Activated CD8-positive, alpha-beta memory T cell treated with anti-CD3 and anti-CD28 coated beads, Interleukin-2, amount 10 ng/mL, durations not matched to agents 7 days and 5 days (primary cell): ENCODE measurements at regions of chr6 and their contacts with region 1.

Region 1: GRCh38 chr6:33771146-33772081 is 17.5 kb downstream of the LEMD2 start:
- DNase-seq: peak; percentile 73
- ATAC-seq: peak; percentile 81
- H3K4me3 Mint-ChIP-seq: no peak overlapping the region
- H3K27ac Mint-ChIP-seq: no peak overlapping the region
- H3K4me1 Mint-ChIP-seq: peaks cover 12% of the 10 kb centered on the region
- H3K27me3 Mint-ChIP-seq: peaks cover 10% of the 10 kb centered on the region

Region 2: GRCh38 chr6:33744001-33744848 is 27.2 kb before region 1 on chr6:
- CTCF ChIA-PET with region 1: interaction called, 17 read pairs
- DNase-seq: peak; percentile 80
- ATAC-seq: peak; percentile 78
- H3K4me3 Mint-ChIP-seq: no peak overlapping the region
- H3K27ac Mint-ChIP-seq: no peak overlapping the region
- H3K4me1 Mint-ChIP-seq: no peaks in the 10 kb centered on the region
- H3K27me3 Mint-ChIP-seq: peaks cover 18% of the 10 kb centered on the region

Region 3: GRCh38 chr6:33788694-33789549 is 17.5 kb after region 1 on chr6 and contains the start of gene LEMD2:
- CTCF ChIA-PET with region 1: interaction called, 16 read pairs
- DNase-seq: peak; percentile 94
- ATAC-seq: peak; percentile 88
- H3K4me3 Mint-ChIP-seq: peak within 1 kb of the TSS; percentile 89
- H3K27ac Mint-ChIP-seq: peak within 1 kb of the TSS; percentile 90
- H3K4me1 Mint-ChIP-seq: peaks cover 45% of the 10 kb centered on the region
- H3K27me3 Mint-ChIP-seq: peaks cover 8% of the 10 kb centered on the region
- total RNA-seq, gene LEMD2: 64.9 to 80.3 TPM

Region 4: GRCh38 chr6:33799454-33800113 is 28.2 kb after region 1 on chr6:
- CTCF ChIA-PET with region 1: interaction called, 11 read pairs
- DNase-seq: no peak
- ATAC-seq: no peak
- H3K4me3 Mint-ChIP-seq: no peak overlapping the region
- H3K27ac Mint-ChIP-seq: no peak overlapping the region
- H3K4me1 Mint-ChIP-seq: peaks cover 3% of the 10 kb centered on the region
- H3K27me3 Mint-ChIP-seq: peaks cover 30% of the 10 kb centered on the region

Region 5: GRCh38 chr6:34055223-34055933 is 284.0 kb after region 1 on chr6:
- CTCF ChIA-PET with region 1: interaction called, 11 read pairs
- DNase-seq: peak; percentile 74
- ATAC-seq: peak; percentile 80
- H3K4me3 Mint-ChIP-seq: no peak overlapping the region
- H3K27ac Mint-ChIP-seq: no peak overlapping the region
- H3K4me1 Mint-ChIP-seq: no peaks in the 10 kb centered on the region
- H3K27me3 Mint-ChIP-seq: peaks cover 8% of the 10 kb centered on the region

Region 6: DNA sequence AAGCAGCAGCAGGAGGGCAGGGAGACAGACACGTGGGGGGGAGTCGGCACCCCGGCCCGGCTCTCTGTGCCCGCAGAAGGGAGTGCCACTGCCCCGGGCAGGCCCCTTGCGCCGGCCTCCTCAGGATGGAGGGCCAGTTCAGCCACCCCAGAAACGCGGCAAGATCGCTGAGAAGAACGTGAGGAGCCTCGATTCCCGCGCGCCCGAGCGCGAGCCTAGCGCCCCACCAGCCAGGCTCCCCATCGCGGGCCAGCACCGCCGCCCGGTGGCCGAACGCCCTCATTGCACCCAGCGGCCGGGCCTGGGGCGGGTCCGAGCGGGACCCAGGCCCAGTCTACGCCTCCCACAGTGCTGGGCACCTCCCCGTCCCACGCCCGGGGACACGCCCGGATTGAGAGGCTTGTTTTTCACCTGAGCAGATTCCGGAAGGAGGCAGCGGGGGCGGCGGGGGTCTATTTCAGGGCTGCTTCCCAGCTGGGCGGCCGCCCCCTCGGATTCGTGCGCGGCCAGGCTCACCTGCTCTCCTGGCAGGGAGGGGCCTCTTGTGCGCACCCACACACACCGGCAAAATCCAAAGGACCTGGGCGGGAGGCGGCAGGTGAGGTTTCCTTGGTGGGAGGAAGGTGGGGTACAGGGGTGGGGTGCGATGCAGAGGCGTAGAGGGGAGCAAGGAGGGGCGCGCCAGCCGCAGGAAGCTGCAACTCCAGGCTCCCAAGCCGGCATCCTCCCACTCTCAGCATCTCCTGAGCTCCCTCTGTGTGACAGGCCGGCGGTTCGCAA is 383.4 kb after region 1 on chr6:
- CTCF ChIA-PET with region 1: interaction called, 38 read pairs
- DNase-seq: peak; percentile 67
- ATAC-seq: peak; percentile 85
- H3K4me3 Mint-ChIP-seq: no peak overlapping the region
- H3K27ac Mint-ChIP-seq: no peak overlapping the region
- H3K4me1 Mint-ChIP-seq: peaks cover 4% of the 10 kb centered on the region
- H3K27me3 Mint-ChIP-seq: peaks cover 72% of the 10 kb centered on the region